K562 (cell line): ENCODE measurements at regions of chr11 and their contacts with region 1.

Region 1: DNA sequence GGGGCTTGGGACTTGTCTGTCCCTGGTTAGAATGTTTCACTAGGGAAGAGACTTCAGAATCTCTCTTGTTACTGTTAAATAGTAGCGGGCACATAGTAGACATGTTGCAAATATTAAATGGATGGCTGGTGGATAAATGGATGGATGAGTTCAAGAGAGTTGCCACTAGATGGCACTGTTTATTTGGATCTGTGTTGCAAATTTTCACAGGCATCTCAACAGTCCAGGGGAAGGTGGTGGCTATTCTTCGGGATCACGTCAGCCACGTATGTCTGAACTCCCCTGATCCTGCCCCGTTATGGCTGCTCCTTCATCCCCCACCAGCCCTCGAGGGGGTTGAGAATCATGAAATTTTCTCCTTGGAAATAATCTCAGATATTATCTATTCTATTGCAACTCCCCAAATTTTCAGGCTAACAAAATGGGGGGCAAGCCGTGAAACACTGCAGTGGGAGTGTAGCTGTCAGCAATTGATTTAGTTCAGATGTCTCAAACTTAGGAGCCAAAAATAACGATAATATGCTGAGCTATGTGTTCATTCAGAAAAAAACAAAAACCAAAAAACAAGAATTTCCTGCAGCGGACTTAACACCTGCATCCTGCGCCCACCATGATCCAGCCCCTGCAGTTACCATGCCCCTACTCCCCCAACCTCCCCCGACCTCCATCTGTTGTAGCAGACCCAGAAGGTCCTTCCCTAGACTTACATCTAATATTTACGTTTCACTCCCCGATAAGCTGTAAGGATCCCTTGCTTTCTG is 29.1 kb upstream of the BIRC3 start:
- DNase-seq: peak; percentile 56 to 76 (median 64)
- ATAC-seq: peak; percentile 95
- H3K4me3 ChIP-seq: no peak overlapping the region
- H3K27ac ChIP-seq: no peak overlapping the region
- H3K4me1 ChIP-seq: peaks cover 0 to 6% of the 10 kb centered on the region in 2 experiments; a peak in 2 of 5 replicates
- H3K27me3 ChIP-seq: peaks cover 0 to 5% of the 10 kb centered on the region in 2 experiments; a peak in 2 of 5 replicates
- CTCF ChIP-seq: peak; percentile 59 to 87 (median 68)
- EP300 ChIP-seq: no peak
- POLR2A ChIP-seq: no peak
- RAD21 ChIP-seq: peak; percentile 77 to 80

Region 2: DNA sequence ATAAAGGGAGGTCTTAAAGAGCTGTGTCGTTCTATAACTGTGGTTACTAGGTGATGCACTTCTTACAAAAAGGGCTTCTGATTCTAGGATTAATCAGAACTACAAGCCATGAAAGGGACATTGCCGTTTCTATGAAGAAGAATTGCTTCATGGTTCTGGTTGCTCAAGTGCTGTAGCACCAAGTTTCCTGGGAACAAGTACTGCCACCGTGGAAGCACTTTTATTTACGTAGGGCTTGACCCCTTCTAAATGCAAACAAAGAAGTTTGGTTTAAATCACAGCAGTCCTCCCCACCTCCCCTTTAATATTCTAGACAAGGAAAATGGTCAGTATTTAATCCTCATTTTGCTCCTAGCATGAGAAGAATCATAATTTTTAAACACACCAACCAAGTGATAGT is 168.1 kb before region 1 on chr11:
- CTCF ChIA-PET with region 1: no interaction called
- POLR2A ChIA-PET with region 1: no interaction called
- in situ Hi-C with region 1: no loop called
- intact Hi-C with region 1: no loop called
- DNase-seq: no peak
- ATAC-seq: no peak
- H3K4me3 ChIP-seq: no peak overlapping the region
- H3K27ac ChIP-seq: no peak overlapping the region
- H3K4me1 ChIP-seq: no peaks in the 10 kb centered on the region; a peak in 1 of 5 replicates
- H3K27me3 ChIP-seq: no peaks in the 10 kb centered on the region
- CTCF ChIP-seq: no peak
- EP300 ChIP-seq: no peak
- POLR2A ChIP-seq: no peak
- RAD21 ChIP-seq: no peak

Region 3: GRCh38 chr11:102204174-102204573 is 84.0 kb before region 1 on chr11:
- CTCF ChIA-PET with region 1: no interaction called
- POLR2A ChIA-PET with region 1: no interaction called
- in situ Hi-C with region 1: no loop called
- intact Hi-C with region 1: no loop called
- DNase-seq: no peak
- ATAC-seq: no peak
- H3K4me3 ChIP-seq: no peak overlapping the region
- H3K27ac ChIP-seq: no peak overlapping the region
- H3K4me1 ChIP-seq: no peaks in the 10 kb centered on the region
- H3K27me3 ChIP-seq: no peaks in the 10 kb centered on the region
- CTCF ChIP-seq: no peak
- EP300 ChIP-seq: no peak
- POLR2A ChIP-seq: no peak
- RAD21 ChIP-seq: no peak

Region 4: GRCh38 chr11:102341844-102342318 is 53.7 kb after region 1 on chr11:
- CTCF ChIA-PET with region 1: no interaction called
- POLR2A ChIA-PET with region 1: interaction called, 5 read pairs
- in situ Hi-C with region 1: loop called (anchors 5 kb)
- intact Hi-C with region 1: loop called (anchors 2 kb)
- DNase-seq: peak; percentile 80 to 96 (median 86)
- ATAC-seq: peak; percentile 89
- H3K4me3 ChIP-seq: no peak overlapping the region
- H3K27ac ChIP-seq: no peak overlapping the region; the same call in 2 of the 3 replicates
- H3K4me1 ChIP-seq: peaks cover 3 to 19% of the 10 kb centered on the region in 2 experiments; a peak in 4 of 5 replicates
- H3K27me3 ChIP-seq: no peaks in the 10 kb centered on the region; a peak in 1 of 5 replicates
- CTCF ChIP-seq: peak; percentile 78 to 89 (median 88)
- EP300 ChIP-seq: peak; percentile 93
- POLR2A ChIP-seq: no peak
- RAD21 ChIP-seq: peak; percentile 81 to 88

Region 5: DNA sequence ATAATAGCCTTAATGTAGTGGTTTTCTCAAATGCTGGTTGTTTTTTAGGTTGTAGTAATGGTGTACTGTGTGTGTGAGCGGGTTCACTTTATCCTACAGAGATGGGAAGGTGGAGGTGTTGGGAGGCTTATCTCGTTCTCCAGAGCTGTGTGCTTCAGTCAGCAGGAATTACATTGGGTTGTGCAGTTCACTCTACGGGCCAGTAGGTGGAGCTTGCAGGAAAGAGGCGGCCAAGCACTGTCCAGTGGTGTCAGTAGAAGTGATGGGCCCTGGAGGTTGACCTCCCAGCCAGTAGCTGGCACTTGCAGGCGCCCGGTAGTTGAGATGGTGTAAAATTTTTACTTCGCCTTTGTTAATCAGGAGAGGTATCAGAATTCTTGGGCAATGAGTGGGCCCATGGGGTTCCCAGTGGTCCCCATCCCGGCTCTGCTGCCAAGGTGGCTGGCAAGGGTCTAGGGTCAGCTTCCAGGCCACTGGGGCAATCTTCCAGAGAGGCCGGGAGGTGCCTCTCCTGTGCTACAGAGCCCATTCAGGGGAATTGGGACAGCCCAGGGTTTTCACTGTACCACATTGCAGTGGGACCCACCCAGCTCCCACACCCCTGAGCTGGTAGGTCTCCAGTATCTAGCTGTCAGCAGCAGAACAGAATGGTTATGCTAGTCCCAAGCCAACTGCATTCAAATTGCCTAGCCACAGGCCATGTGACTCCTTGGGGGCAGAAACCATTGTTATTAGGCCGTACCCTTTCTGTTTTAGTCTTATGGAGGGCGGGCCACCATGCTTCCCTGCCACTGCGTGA is 102.7 kb after region 1 on chr11:
- CTCF ChIA-PET with region 1: no interaction called
- POLR2A ChIA-PET with region 1: no interaction called
- in situ Hi-C with region 1: no loop called
- intact Hi-C with region 1: loop called (anchors 5 kb)
- DNase-seq: peak; percentile 63 to 87 (median 67)
- ATAC-seq: peak; percentile 96
- H3K4me3 ChIP-seq: no peak overlapping the region
- H3K27ac ChIP-seq: no peak overlapping the region
- H3K4me1 ChIP-seq: peaks cover 8 to 18% of the 10 kb centered on the region in 2 experiments; a peak in 4 of 5 replicates
- H3K27me3 ChIP-seq: no peaks in the 10 kb centered on the region
- CTCF ChIP-seq: peak; percentile 88 to 92 (median 90)
- EP300 ChIP-seq: no peak; the same call in 1 of the 2 replicates
- POLR2A ChIP-seq: no peak
- RAD21 ChIP-seq: peak; percentile 66 to 75

Region 6: DNA sequence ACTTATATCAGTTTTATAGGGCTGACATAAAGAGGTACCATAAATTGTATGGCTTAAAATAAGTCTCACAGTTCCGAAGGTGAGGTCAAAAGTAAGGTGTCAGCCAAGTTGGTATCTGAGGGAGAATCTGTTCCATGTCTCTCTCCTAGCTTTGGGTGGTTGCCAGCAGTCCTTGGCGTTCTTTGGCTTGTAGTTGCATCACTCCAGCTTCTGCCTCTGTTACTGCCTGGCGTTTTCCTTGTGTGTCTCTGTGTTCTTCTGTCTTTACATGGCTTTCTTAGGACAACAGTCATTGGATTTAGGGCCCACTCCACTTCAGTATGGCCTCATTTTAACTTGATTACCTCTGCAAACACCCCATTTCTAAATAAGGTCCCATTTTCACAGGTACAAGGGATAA is 225.7 kb after region 1 on chr11:
- CTCF ChIA-PET with region 1: interaction called, 5 read pairs
- POLR2A ChIA-PET with region 1: interaction called, 4 read pairs
- in situ Hi-C with region 1: no loop called
- intact Hi-C with region 1: loop called (anchors 5 kb)
- DNase-seq: peak in 1 of 4 experiments; percentile 6
- ATAC-seq: peak; percentile 53; the same call in 2 of the 3 replicates
- H3K4me3 ChIP-seq: no peak overlapping the region
- H3K27ac ChIP-seq: no peak overlapping the region
- H3K4me1 ChIP-seq: no peaks in the 10 kb centered on the region
- H3K27me3 ChIP-seq: no peaks in the 10 kb centered on the region; a peak in 1 of 5 replicates
- CTCF ChIP-seq: no peak
- EP300 ChIP-seq: no peak
- POLR2A ChIP-seq: no peak
- RAD21 ChIP-seq: no peak

Region 7: GRCh38 chr11:102614485-102614884 is 326.3 kb after region 1 on chr11:
- CTCF ChIA-PET with region 1: no interaction called
- POLR2A ChIA-PET with region 1: no interaction called
- in situ Hi-C with region 1: no loop called
- intact Hi-C with region 1: loop called (anchors 2 kb)
- DNase-seq: no peak
- ATAC-seq: no peak
- H3K4me3 ChIP-seq: no peak overlapping the region
- H3K27ac ChIP-seq: no peak overlapping the region
- H3K4me1 ChIP-seq: no peaks in the 10 kb centered on the region
- H3K27me3 ChIP-seq: peaks cover 0 to 10% of the 10 kb centered on the region in 2 experiments; a peak in 2 of 5 replicates
- CTCF ChIP-seq: no peak
- EP300 ChIP-seq: no peak
- POLR2A ChIP-seq: no peak
- RAD21 ChIP-seq: no peak

Region 8: GRCh38 chr11:102666331-102666957 is 378.3 kb after region 1 on chr11:
- CTCF ChIA-PET with region 1: no interaction called
- POLR2A ChIA-PET with region 1: no interaction called
- in situ Hi-C with region 1: no loop called
- intact Hi-C with region 1: loop called (anchors 1 kb)
- DNase-seq: peak; percentile 48 to 61 (median 54)
- ATAC-seq: peak; percentile 87
- H3K4me3 ChIP-seq: no peak overlapping the region
- H3K27ac ChIP-seq: no peak overlapping the region
- H3K4me1 ChIP-seq: no peaks in the 10 kb centered on the region
- H3K27me3 ChIP-seq: peaks cover 0 to 6% of the 10 kb centered on the region in 2 experiments; a peak in 1 of 5 replicates
- CTCF ChIP-seq: peak; percentile 71 to 88 (median 79)
- EP300 ChIP-seq: no peak
- POLR2A ChIP-seq: no peak
- RAD21 ChIP-seq: peak; percentile 80 to 81